Endothelial cell of umbilical vein (primary cell): ENCODE measurements at regions of chr3 and their contacts with region 1.

Region 1: DNA sequence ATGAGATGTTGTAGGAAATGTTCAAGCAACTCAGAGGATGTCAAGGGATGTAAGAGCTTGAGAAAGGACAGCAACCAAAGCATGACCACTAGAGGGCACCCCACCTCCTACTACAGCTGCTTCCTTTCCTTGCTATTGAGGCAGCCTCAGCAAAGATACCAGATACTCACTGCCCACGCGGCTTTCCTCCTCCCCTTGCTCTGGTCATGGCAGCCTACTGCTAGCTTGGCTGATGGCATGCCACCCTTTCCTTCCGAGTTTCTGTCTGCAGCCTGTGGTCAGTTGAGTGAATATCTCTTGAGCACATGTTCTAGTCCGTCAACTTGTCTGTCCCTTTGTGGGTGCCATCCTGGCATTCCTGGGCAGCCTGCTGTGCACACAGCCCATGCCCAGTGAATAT is 4.4 kb upstream of the CXCR6 start:
- DNase-seq: peak; percentile 86
- H3K4me3 ChIP-seq: no peak overlapping the region
- H3K27ac ChIP-seq: no peak overlapping the region
- H3K4me1 ChIP-seq: no peaks in the 10 kb centered on the region
- H3K27me3 ChIP-seq: no peaks in the 10 kb centered on the region
- CTCF ChIP-seq: peak; percentile 90 to 93
- POLR2A ChIP-seq: no peak

Region 2: DNA sequence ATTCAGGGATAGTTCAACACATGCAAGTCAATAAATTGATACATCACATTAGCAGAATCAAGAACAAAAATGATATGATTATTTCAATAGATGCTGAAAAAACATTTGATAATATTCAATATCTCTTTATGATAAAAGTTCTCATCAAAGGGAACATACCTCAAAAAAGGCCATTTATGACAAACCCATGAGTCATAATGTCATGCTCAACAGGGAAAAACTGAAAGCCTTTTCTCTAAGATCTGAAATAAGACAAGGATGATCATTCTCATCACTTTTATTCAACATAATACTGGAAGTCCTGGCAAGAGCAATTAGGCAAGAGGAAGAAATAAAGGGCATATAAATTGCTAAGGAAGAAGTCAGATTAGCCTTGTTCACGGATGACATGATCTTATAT is 658.6 kb before region 1 on chr3:
- CTCF ChIA-PET with region 1: no interaction called
- POLR2A ChIA-PET with region 1: no interaction called
- dilution Hi-C with region 1: no loop called
- intact Hi-C with region 1: no loop called
- DNase-seq: no peak
- H3K4me3 ChIP-seq: no peak overlapping the region
- H3K27ac ChIP-seq: no peak overlapping the region
- H3K4me1 ChIP-seq: no peaks in the 10 kb centered on the region
- H3K27me3 ChIP-seq: peaks cover 0 to 4% of the 10 kb centered on the region in 2 experiments
- CTCF ChIP-seq: no peak
- POLR2A ChIP-seq: no peak

Region 3: DNA sequence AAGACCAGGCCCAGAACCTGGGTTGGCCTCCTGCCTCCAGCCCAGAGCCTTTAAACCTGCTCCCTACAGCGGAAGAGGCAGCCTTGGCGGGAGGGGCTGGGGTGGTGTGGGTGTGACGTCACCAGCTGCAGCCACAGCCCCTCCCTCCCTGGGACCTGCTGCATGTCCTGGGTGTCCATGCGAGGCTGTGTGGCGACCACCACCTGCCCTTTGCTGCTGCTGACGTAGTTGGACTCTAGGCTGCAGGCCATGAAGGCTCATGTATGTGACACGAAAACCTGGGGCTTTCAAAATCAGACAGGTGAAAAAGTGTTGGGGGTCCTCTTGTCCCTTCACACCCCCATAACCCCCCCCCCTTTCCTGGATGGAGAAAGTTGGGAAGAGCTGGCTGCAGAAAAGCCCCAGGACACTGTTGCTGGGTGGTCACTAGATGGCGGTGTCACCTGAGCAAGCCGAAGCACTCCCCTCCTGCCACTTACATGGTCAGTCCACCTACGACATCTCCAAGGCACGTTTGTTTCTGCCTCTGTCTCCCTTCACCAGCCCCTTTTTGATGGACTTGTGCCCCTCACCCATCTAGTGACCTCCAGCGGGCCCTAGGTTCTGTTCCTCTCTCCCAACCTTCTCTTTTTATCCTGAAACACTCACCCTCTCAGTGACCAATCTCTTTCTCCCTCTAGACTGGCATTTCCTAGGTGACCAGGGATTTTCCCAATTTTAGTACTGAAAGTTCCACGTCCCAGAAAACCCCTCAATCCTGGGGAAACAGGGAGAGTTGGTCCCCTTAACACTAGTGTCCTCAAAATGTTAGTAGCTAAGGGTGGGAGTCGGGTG is 177.8 kb before region 1 on chr3:
- CTCF ChIA-PET with region 1: interaction called, 10 read pairs
- POLR2A ChIA-PET with region 1: no interaction called
- dilution Hi-C with region 1: no loop called
- intact Hi-C with region 1: no loop called
- DNase-seq: peak; percentile 48
- H3K4me3 ChIP-seq: no peak overlapping the region
- H3K27ac ChIP-seq: no peak overlapping the region
- H3K4me1 ChIP-seq: no peaks in the 10 kb centered on the region
- H3K27me3 ChIP-seq: no peaks in the 10 kb centered on the region
- CTCF ChIP-seq: peak; percentile 66 to 95
- POLR2A ChIP-seq: no peak

Region 4: DNA sequence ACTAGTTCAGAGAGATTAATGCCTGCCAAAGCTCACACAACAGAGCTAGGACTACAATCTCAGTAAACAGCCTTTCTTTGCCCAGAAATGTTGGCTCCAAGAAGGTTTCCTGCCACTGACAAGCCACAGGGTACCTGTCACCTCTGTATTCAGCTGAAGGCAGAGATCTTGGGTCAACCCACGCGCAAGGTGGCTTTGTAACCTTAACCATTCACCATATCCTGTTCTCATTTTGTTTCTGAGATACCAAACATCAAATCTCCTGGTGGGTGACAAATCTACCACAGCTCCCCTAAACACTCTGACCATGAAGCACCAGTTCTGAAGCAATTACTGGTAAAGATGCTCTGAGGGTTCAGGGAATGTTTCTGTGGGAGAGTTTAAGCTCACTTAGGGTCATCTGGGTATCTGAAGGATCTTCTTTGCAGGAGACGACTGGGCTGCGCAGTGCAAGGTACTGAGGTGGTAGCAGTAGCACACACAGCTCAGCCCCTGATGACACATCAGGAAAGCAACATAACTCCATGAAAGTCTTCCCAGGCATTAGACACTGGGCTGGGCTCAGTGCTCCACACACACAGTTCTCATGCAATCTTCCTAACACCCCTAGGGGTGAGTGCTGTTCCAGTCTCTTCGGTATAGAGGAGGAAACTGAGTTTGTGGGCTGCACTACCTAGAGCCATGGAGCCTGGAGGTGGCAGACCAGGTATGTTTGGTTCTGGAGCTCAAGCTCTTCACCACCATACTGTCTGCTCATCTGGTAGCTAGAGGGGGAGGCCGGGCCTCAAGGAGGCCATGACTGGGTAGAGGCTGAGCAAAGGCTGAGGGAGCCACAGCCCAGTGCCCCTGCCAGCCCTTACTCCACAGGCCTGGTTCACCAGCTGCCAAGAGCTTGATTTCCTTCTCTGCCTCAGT is 12.1 kb after region 1 on chr3:
- CTCF ChIA-PET with region 1: interaction called, 22 read pairs
- POLR2A ChIA-PET with region 1: no interaction called
- dilution Hi-C with region 1: no loop called
- intact Hi-C with region 1: no loop called
- DNase-seq: no peak
- H3K4me3 ChIP-seq: no peak overlapping the region
- H3K27ac ChIP-seq: no peak overlapping the region
- H3K4me1 ChIP-seq: no peaks in the 10 kb centered on the region
- H3K27me3 ChIP-seq: no peaks in the 10 kb centered on the region
- CTCF ChIP-seq: no peak
- POLR2A ChIP-seq: no peak

Region 5: GRCh38 chr3:45968706-45969105 is 29.8 kb after region 1 on chr3:
- CTCF ChIA-PET with region 1: interaction called, 16 read pairs
- POLR2A ChIA-PET with region 1: no interaction called
- dilution Hi-C with region 1: no loop called
- intact Hi-C with region 1: no loop called
- DNase-seq: no peak
- H3K4me3 ChIP-seq: no peak overlapping the region
- H3K27ac ChIP-seq: no peak overlapping the region
- H3K4me1 ChIP-seq: no peaks in the 10 kb centered on the region
- H3K27me3 ChIP-seq: no peaks in the 10 kb centered on the region
- CTCF ChIP-seq: no peak
- POLR2A ChIP-seq: no peak

Region 6: GRCh38 chr3:45995236-45996192 is 56.6 kb after region 1 on chr3 and contains the start of gene FYCO1:
- CTCF ChIA-PET with region 1: interaction called, 3 read pairs
- POLR2A ChIA-PET with region 1: no interaction called
- dilution Hi-C with region 1: no loop called
- intact Hi-C with region 1: loop called (anchors 2 kb)
- DNase-seq: peak; percentile 88
- H3K4me3 ChIP-seq: peak within 1 kb of the TSS; percentile 85 to 97 (median 97)
- H3K27ac ChIP-seq: peak within 1 kb of the TSS; percentile 44
- H3K4me1 ChIP-seq: peaks cover 7% of the 10 kb centered on the region
- H3K27me3 ChIP-seq: peaks cover 0 to 2% of the 10 kb centered on the region in 2 experiments
- CTCF ChIP-seq: no peak
- POLR2A ChIP-seq: peak; percentile 71
- total RNA-seq, gene FYCO1: 20.2 and 20.8 TPM in 2 replicates

Region 7: DNA sequence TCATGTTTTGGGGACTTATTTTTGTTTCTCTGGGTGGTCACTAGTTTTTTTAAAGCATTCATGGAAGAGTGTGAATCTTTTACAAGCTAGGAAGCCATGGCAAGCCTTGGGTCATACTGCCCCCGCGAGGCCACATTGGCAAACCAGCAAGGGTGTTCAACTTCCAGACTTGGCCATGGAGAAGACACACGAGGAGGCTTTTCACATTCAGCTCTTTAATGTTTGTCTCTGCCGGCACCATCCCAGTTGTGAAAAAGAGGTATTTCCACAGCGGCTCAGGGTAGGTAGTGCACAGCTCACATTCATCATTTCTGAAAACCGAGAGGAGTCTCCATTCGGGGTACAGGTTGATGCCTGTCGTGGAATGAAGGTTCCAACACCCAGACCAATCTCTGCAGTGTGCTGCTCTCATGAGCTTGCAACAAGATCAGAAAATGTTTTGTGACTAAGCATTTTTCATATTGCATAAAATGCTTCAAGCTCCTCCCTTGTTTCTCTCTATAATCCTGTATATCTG is 439.6 kb after region 1 on chr3:
- CTCF ChIA-PET with region 1: interaction called, 19 read pairs
- POLR2A ChIA-PET with region 1: no interaction called
- dilution Hi-C with region 1: no loop called
- intact Hi-C with region 1: loop called (anchors 2 kb)
- DNase-seq: peak; percentile 56
- H3K4me3 ChIP-seq: no peak overlapping the region
- H3K27ac ChIP-seq: no peak overlapping the region
- H3K4me1 ChIP-seq: no peaks in the 10 kb centered on the region
- H3K27me3 ChIP-seq: peaks cover 8 to 13% of the 10 kb centered on the region in 2 experiments
- CTCF ChIP-seq: peak; percentile 76 to 82
- POLR2A ChIP-seq: no peak